IMR-90 (cell line): ENCODE measurements at regions of chr6 and their contacts with region 1.

Region 1: DNA sequence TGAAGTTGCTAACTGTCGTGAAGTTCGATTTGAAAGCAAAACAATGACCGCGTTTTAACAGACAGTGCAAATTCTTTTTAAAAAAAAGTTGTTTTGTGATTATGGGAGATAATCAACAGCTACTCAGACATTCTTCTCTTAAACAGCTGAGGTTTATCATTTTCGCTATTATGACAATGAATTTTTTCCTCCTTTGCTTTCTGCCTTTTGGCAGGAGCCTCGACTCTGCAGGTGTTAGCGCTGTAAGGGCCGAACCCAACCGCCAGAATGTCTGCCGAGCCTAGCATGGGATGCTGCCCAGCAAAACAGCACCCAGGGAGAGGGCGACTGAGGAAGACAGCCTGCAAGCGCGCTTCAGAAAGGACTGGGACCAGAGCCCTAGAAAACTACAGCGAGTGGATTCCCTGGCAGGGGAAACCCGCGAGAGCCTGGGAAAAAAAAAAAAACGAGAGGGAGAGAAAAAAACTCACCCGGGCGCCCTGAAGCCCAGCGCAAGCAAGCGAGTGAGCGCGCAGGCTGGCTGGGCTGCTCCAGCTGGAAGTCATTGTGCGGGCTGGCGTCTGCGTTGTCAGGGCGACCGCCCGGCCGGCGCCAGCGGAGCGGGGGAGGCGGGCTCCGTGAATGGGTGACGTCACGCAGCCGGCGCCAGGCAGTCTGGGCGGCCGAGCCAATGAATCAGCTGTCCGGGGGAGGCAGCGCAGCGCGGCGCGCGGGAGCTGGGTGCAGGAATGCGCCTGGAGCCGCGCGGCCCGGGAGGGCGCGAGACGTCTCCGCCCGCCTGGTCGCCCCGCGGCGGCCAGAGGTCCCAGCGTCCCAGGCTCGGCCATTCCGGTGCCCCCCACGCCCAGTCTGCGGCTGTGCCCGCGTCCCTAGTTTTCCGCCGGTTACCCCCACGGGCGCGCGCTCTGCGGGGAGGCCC is 32.7 kb upstream of the ID4 start:
- DNase-seq: peak; percentile 96
- ATAC-seq: peak; percentile 98
- H3K4me3 ChIP-seq: peak overlapping the region; percentile 63
- H3K27ac ChIP-seq: peak overlapping the region; percentile 93
- H3K4me1 ChIP-seq: peaks cover 2% of the 10 kb centered on the region
- H3K27me3 ChIP-seq: no peaks in the 10 kb centered on the region
- CTCF ChIP-seq: 0 out of 2 replicates have a peak, but pooled peaks have one; percentile 3
- POLR2A ChIP-seq: peak; percentile 96
- RAD21 ChIP-seq: peak; percentile 19

Region 2: GRCh38 chr6:19492636-19493405 is 311.6 kb before region 1 on chr6:
- CTCF ChIA-PET with region 1: no interaction called
- POLR2A ChIA-PET with region 1: no interaction called
- dilution Hi-C with region 1: no loop called
- in situ Hi-C with region 1: no loop called
- intact Hi-C with region 1: no loop called
- DNase-seq: no peak
- ATAC-seq: no peak
- H3K4me3 ChIP-seq: no peak overlapping the region
- H3K27ac ChIP-seq: no peak overlapping the region
- H3K4me1 ChIP-seq: no peaks in the 10 kb centered on the region
- H3K27me3 ChIP-seq: no peaks in the 10 kb centered on the region
- CTCF ChIP-seq: no peak
- POLR2A ChIP-seq: no peak
- RAD21 ChIP-seq: no peak

Region 3: GRCh38 chr6:19599796-19600464 is 204.5 kb before region 1 on chr6:
- CTCF ChIA-PET with region 1: no interaction called
- POLR2A ChIA-PET with region 1: no interaction called
- dilution Hi-C with region 1: no loop called
- in situ Hi-C with region 1: no loop called
- intact Hi-C with region 1: no loop called
- DNase-seq: no peak
- ATAC-seq: no peak
- H3K4me3 ChIP-seq: no peak overlapping the region
- H3K27ac ChIP-seq: no peak overlapping the region
- H3K4me1 ChIP-seq: no peaks in the 10 kb centered on the region
- H3K27me3 ChIP-seq: no peaks in the 10 kb centered on the region
- CTCF ChIP-seq: no peak
- POLR2A ChIP-seq: no peak
- RAD21 ChIP-seq: no peak

Region 4: GRCh38 chr6:19719691-19720128 is 84.8 kb before region 1 on chr6:
- CTCF ChIA-PET with region 1: no interaction called
- POLR2A ChIA-PET with region 1: interaction called, 3 read pairs
- dilution Hi-C with region 1: no loop called
- in situ Hi-C with region 1: no loop called
- intact Hi-C with region 1: loop called (anchors 5 kb)
- DNase-seq: peak; percentile 70
- ATAC-seq: peak; percentile 79
- H3K4me3 ChIP-seq: no peak overlapping the region
- H3K27ac ChIP-seq: no peak overlapping the region
- H3K4me1 ChIP-seq: peaks cover 3% of the 10 kb centered on the region
- H3K27me3 ChIP-seq: no peaks in the 10 kb centered on the region
- CTCF ChIP-seq: no peak
- POLR2A ChIP-seq: no peak
- RAD21 ChIP-seq: no peak

Region 5: DNA sequence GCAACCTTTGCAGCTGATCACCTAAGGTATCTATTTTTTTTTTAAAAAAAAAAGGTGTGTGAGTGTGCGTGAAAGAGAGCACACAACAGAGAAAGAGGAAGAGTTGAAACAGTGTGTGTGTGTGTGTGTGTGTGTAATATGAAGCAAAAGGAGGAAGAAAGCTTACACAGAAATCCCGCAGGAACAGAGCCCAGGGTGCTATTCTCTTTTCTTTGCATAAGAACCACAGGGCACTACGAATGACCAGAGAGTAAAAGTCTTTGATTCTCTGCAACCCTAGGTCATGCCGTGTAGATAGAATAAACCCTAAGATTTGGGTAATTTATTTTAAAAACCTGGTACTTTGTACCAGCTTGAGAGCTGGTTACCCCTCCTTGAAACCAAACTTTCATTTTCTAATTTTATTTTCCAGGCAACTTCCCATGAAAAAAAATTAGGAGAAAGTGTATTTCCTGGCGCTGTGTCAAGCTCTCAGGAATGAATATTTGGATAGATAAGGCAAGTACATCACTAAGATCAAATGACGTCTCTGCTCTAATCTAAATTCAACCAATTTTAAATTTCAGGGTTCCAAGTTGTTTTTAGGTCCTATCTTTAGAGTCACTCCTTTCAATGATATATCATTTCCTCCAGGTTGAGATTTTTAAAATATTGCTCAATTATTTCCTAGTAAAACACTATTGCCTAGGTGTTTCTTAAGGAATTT is 15.2 kb before region 1 on chr6:
- CTCF ChIA-PET with region 1: no interaction called
- POLR2A ChIA-PET with region 1: interaction called, 18 read pairs
- dilution Hi-C with region 1: no loop called
- in situ Hi-C with region 1: no loop called
- intact Hi-C with region 1: no loop called
- DNase-seq: peak; percentile 26
- ATAC-seq: no peak; the same call in 1 of the 2 replicates
- H3K4me3 ChIP-seq: no peak overlapping the region
- H3K27ac ChIP-seq: no peak overlapping the region
- H3K4me1 ChIP-seq: peaks cover 6% of the 10 kb centered on the region
- H3K27me3 ChIP-seq: no peaks in the 10 kb centered on the region
- CTCF ChIP-seq: no peak
- POLR2A ChIP-seq: no peak
- RAD21 ChIP-seq: no peak

Region 6: DNA sequence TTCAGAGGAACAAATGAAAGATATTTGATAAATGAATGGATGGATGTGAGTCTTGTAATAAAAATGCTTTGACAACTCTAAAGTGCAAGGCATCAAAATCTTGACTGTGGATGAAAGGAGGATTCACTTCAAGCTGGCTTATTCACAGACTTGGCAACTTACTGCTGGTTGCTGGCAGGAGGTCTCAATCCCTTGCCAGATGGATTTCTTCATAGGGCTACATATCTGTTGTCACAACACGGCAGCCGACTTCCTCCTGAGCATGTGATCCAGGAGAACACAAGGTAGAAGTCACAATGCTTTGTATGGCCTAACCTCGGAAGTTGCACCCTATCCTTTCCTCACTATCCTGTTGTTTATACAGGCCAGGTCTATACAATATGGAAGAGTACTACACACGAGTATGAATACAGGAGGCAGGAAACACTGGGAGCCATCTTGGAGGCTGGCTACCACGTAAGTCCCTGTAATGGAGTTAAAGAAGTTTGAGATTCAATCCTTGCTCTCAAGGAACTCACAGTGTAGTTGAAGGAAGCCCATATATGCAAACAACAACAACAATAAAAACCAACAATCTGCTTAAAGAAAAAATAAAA is 130.6 kb after region 1 on chr6:
- CTCF ChIA-PET with region 1: no interaction called
- POLR2A ChIA-PET with region 1: no interaction called
- dilution Hi-C with region 1: no loop called
- in situ Hi-C with region 1: no loop called
- intact Hi-C with region 1: no loop called
- DNase-seq: no peak
- ATAC-seq: no peak
- H3K4me3 ChIP-seq: no peak overlapping the region
- H3K27ac ChIP-seq: no peak overlapping the region
- H3K4me1 ChIP-seq: no peaks in the 10 kb centered on the region
- H3K27me3 ChIP-seq: no peaks in the 10 kb centered on the region
- CTCF ChIP-seq: no peak
- POLR2A ChIP-seq: no peak
- RAD21 ChIP-seq: no peak